ENCODE measurements at regions of chr5 and their contacts with region 1.

Region 1: GRCh38 chr5:143196601-143197259 is 206.8 kb downstream of the NR3C1 start:
- DNase-seq: no peak
- H3K4me3 Mint-ChIP-seq: peak overlapping the region; percentile 30
- H3K27ac Mint-ChIP-seq: peak overlapping the region; percentile 77
- H3K4me1 Mint-ChIP-seq: peaks cover 30% of the 10 kb centered on the region
- H3K27me3 Mint-ChIP-seq: no peaks in the 10 kb centered on the region

Region 2: DNA sequence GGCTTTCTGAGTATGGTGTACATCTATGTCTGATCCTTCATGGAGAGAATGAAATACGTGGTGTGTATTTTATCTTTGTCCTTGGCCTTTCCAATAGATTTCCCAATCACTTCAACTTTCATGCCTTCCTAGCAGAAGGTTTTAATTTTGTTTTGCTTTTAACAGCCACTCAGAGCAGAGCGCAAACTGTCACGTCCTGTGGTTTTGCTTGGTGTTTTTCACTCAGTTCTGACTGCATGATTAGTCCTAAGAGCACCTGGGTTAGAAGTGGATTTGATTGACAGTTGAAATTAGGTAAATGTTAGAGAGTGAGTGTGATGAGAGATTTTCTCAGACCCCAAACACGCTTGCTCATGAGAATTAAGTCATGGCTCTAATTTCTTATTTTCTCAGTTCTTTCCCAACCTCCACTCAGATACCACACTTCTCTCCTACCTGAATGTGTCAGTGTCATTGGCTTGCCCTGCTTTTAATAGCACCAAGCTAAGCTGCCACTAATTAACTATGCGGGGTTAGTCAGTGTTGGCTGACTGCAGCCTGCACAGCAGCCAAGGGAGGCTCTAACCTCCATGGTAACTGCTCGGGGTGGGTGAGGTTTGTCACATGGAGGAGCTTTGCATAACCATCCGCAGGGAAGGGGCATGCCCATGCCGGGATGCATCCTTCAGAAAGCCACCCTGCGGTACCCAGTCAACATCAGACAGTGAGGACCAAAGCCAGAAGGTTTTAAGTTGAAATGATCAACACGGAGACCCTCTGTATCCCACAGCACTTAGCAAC is 33.4 kb after region 1 on chr5:
- intact Hi-C with region 1: loop called (anchors 1 kb)
- DNase-seq: peak; percentile 45
- H3K4me3 Mint-ChIP-seq: peak overlapping the region; percentile 43
- H3K27ac Mint-ChIP-seq: peak overlapping the region; percentile 87
- H3K4me1 Mint-ChIP-seq: peaks cover 41% of the 10 kb centered on the region
- H3K27me3 Mint-ChIP-seq: no peaks in the 10 kb centered on the region

Measured in activated T-helper 1 cell treated with anti-CD3 and anti-CD28 coated beads, Interleukin-12 subunit alpha, Interleukin-12 subunit beta, Interleukin-2, Interleukin-4 antibody, amounts not matched to agents 30 ng/mL and 10 ng/mL and 1 ng/mL, durations not matched to agents 14 hours and 24 hours and 36 hours (primary cell).